ENCODE measurements at regions of chr2 and their contacts with region 1.

Region 1: DNA sequence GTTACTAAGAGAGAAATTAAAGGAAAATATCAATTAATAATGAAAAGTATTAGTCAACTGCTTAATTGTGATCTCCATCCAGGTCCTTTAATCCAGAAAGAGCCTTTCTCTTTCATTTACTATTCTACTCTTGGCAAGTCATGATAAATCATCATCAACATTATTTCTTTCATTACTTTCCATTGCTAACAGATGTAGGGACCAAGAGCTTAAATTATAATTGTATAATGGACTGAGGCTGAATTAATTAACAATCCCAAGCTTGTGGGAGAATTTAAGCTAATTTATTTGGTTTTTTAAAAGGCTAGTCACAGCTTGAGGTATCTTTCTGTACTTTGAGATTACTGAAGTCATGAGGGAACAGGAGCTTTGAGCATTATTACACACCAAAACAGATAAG is 223.9 kb downstream of the ERBB4 start:
- DNase-seq: no peak

Region 2: DNA sequence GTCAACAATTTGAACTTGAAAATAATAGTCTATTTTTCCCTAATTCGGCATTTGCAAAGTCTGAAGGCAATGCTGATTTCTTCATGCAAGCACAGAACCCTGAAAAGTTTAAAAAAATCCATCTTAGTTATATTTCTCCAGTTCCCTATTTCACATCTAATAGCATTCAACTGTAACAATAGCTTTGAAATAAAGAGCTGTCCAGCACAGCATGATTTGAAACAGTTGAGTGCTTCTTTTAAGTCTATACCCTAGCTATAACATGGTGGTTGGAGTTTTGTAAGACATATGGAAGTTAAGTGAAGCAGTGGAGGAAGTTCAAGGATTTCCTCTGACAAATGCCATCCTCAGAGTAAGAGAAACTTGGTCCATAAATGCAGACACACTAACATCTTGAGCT is 468.0 kb before region 1 on chr2:
- intact Hi-C with region 1: loop called in 1 of 2 experiments (anchors 5 kb)
- DNase-seq: no peak

Region 3: DNA sequence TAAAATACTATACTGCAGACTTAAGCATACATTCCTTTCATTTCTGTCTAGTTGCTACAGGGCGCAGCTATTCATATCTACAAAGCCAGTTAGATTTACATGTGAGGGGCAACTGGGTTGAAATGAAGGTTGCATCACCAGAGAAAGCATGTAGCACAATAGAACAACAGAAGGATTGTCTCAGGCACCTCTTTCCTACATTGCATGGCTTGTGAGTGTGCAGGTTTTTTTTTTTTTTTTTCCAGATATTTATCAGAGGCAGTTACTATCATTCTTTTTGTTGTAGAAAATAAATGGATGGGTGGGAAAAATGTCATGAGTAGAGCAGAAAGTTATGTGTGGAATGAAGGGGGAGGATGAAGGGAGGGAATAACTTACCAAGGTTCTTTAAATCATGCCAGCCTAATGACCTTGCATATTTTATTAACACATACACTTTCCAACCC is 137.1 kb after region 1 on chr2:
- intact Hi-C with region 1: no loop called
- DNase-seq: no peak